ENCODE measurements at regions of chr16 and their contacts with region 1.

Region 1: DNA sequence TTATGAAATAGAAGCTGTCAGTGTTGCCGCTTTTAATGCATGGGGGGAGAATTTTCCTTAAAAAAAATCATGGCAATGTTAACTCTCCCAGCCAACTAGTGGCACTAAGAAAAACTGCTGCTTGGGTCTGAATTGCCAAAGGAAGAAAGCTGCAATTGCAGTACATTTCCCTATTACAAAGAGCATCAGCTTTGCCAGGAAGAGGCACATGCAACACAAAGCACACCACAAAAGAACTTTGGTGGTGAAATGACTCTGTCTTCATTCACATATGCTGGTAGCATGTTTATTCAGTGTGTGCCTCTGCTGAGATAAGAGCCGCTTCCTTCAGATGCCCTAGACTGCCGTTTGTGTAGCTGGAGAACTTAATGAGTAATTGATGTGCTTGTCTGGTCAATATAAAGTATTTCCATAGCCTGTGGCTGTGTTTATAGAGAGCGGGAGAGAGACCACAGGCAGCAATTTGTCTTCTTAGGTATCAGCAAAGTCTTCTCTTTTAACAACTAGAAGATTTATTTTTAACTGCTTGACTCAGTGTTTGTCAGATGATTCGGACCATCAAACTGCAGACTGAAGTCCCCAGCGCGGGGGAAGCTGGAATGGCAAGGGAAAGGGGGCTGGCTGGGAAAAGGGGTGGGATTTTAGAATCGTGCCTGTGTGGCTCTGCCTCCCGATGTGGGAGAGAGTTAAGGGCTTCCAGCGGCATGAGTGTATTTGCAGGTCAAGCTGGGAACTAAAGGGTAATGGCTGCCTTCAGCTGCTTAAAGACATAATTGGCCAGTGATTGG is 115.1 kb downstream of the MRTFB start:
- DNase-seq: peak; percentile 25
- H3K4me3 ChIP-seq: no peak overlapping the region
- H3K27ac ChIP-seq: no peak overlapping the region
- H3K4me1 ChIP-seq: peaks cover 17% of the 10 kb centered on the region
- H3K27me3 ChIP-seq: no peaks in the 10 kb centered on the region
- CTCF ChIP-seq: peak; percentile 48

Region 2: DNA sequence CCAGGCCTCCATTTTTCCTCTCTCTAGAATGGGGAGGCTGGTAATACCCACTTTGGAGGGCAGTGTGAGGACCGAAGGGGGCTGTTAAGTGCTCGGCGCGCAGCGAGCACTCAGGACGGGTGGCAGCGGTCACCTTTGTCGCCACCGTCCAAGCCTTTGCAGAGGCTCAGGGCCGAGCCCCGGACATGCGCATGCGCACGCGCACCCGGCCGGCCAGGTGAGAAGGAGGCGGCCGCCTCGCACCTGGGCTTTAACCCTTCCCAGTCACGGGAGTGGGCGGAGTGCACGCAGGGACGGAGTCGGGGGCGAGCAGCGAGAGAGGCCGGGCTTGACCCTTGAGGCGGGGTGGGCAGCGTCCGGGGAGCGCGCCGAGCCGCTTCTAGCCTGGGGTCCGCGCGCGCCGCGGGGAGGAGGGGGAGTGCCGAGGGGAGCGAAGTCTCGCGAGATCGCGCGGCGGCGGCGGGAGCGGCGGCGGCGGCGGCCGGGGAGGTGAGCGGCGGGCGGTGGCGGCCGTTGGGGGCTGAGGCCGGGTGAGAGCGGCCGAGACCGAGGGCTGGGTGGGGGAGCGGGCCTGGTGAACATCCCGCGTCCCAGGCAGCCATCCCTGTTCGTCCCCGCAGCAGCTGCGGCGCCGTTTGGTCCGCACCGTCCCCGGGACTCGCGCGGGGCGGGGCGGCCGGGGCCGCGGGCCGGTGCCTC is 115.2 kb before region 1 on chr16 and contains the start of gene MRTFB:
- CTCF ChIA-PET with region 1: no interaction called
- POLR2A ChIA-PET with region 1: no interaction called
- intact Hi-C with region 1: loop called (anchors 10 kb)
- DNase-seq: peak; percentile 76
- H3K4me3 ChIP-seq: peak within 1 kb of the TSS; percentile 74
- H3K27ac ChIP-seq: peak within 1 kb of the TSS; percentile 88
- H3K4me1 ChIP-seq: no peaks in the 10 kb centered on the region
- H3K27me3 ChIP-seq: no peaks in the 10 kb centered on the region
- CTCF ChIP-seq: no peak
- total RNA-seq, gene MRTFB: 29.8 and 35.7 TPM in 2 replicates

Region 3: GRCh38 chr16:14148569-14148968 is 37.6 kb before region 1 on chr16:
- CTCF ChIA-PET with region 1: no interaction called
- POLR2A ChIA-PET with region 1: no interaction called
- intact Hi-C with region 1: no loop called
- DNase-seq: no peak
- H3K4me3 ChIP-seq: no peak overlapping the region
- H3K27ac ChIP-seq: no peak overlapping the region
- H3K4me1 ChIP-seq: no peaks in the 10 kb centered on the region
- H3K27me3 ChIP-seq: no peaks in the 10 kb centered on the region
- CTCF ChIP-seq: no peak

Region 4: DNA sequence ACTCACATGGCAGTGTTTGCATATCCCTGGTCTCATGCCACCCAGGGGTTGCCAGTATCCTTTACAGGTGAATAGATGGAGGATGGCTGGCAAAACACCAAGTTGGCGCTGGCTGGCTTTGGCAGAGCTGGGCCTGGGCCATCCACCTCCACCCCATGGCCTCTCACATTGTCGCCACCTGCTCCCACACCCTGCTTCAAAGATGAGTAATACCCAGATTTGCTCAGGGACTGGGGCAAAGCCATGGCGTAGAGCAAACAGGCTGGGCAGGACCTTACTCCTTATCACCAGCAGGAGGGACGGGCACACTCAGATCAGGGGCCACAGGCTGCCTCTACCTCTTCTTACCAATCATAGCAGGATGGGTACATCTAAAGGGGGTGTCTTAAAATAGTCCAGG is 483.6 kb after region 1 on chr16:
- CTCF ChIA-PET with region 1: no interaction called
- POLR2A ChIA-PET with region 1: no interaction called
- intact Hi-C with region 1: no loop called
- DNase-seq: no peak
- H3K4me3 ChIP-seq: no peak overlapping the region
- H3K27ac ChIP-seq: no peak overlapping the region
- H3K4me1 ChIP-seq: peaks cover 6% of the 10 kb centered on the region
- H3K27me3 ChIP-seq: no peaks in the 10 kb centered on the region
- CTCF ChIP-seq: no peak